HepG2 (cell line): ENCODE measurements at regions of chr7 and their contacts with region 1.

Region 1: GRCh38 chr7:157875230-157876179 is 538.7 kb downstream of the DNAJB6 start:
- DNase-seq: no peak
- ATAC-seq: peak; percentile 89
- H3K4me3 ChIP-seq: no peak overlapping the region
- H3K27ac ChIP-seq: no peak overlapping the region
- H3K4me1 ChIP-seq: no peaks in the 10 kb centered on the region
- H3K27me3 ChIP-seq: peaks cover 2 to 5% of the 10 kb centered on the region in 2 experiments; a peak in 3 of 5 replicates
- CTCF ChIP-seq: peak; percentile 91
- EP300 ChIP-seq: no peak
- POLR2A ChIP-seq: no peak
- RAD21 ChIP-seq: peak; percentile 64

Region 2: GRCh38 chr7:157432957-157433576 is 442.4 kb before region 1 on chr7:
- CTCF ChIA-PET with region 1: interaction called, 7 read pairs
- POLR2A ChIA-PET with region 1: no interaction called
- in situ Hi-C with region 1: loop called (anchors 10 kb)
- intact Hi-C with region 1: loop called (anchors 2 kb)
- DNase-seq: no peak
- ATAC-seq: peak; percentile 57
- H3K4me3 ChIP-seq: no peak overlapping the region
- H3K27ac ChIP-seq: no peak overlapping the region
- H3K4me1 ChIP-seq: no peaks in the 10 kb centered on the region
- H3K27me3 ChIP-seq: peaks cover 2 to 27% of the 10 kb centered on the region in 2 experiments
- CTCF ChIP-seq: peak; percentile 81
- EP300 ChIP-seq: no peak
- POLR2A ChIP-seq: no peak
- RAD21 ChIP-seq: peak; percentile 58; the same call in 1 of the 2 replicates